Transverse colon (tissue), 4 donors: ENCODE measurements at regions of chr1 and their contacts with region 1.

Region 1: DNA sequence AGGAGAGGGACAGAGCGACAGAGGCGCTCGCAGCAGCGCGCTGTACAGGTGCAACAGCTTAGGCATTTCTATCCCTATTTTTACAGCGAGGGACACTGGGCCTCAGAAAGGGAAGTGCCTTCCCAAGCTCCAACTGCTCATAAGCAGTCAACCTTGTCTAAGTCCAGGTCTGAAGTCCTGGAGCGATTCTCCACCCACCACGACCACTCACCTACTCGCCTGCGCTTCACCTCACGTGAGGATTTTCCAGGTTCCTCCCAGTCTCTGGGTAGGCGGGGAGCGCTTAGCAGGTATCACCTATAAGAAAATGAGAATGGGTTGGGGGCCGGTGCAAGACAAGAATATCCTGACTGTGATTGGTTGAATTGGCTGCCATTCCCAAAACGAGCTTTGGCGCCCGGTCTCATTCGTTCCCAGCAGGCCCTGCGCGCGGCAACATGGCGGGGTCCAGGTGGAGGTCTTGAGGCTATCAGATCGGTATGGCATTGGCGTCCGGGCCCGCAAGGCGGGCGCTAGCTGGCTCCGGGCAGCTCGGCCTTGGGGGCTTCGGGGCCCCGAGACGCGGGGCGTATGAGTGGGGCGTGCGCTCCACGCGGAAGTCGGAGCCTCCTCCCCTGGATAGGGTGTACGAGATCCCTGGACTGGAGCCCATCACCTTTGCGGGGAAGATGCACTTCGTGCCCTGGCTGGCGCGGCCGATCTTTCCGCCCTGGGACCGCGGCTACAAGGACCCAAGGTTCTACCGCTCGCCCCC is at the starts of genes CYB5RL and MRPL37:
- DNase-seq: peak; percentile 94
- H3K4me3 ChIP-seq: peak within 1 kb of the TSS; percentile 84 to 97 (median 90)
- H3K27ac ChIP-seq: peak within 1 kb of the TSS; percentile 80 to 87 (median 82)
- H3K4me1 ChIP-seq: peaks cover 10 to 28% (median 23%) of the 10 kb centered on the region in 4 donors
- H3K27me3 ChIP-seq: no peaks in the 10 kb centered on the region
- CTCF ChIP-seq: no peak
- EP300 ChIP-seq: no peak
- POLR2A ChIP-seq: peak; percentile 55
- total RNA-seq, gene CYB5RL: 1.9 to 5.1 (median 3.6) TPM
- total RNA-seq, gene MRPL37: 9.7 to 122 (median 57.8) TPM

Region 2: DNA sequence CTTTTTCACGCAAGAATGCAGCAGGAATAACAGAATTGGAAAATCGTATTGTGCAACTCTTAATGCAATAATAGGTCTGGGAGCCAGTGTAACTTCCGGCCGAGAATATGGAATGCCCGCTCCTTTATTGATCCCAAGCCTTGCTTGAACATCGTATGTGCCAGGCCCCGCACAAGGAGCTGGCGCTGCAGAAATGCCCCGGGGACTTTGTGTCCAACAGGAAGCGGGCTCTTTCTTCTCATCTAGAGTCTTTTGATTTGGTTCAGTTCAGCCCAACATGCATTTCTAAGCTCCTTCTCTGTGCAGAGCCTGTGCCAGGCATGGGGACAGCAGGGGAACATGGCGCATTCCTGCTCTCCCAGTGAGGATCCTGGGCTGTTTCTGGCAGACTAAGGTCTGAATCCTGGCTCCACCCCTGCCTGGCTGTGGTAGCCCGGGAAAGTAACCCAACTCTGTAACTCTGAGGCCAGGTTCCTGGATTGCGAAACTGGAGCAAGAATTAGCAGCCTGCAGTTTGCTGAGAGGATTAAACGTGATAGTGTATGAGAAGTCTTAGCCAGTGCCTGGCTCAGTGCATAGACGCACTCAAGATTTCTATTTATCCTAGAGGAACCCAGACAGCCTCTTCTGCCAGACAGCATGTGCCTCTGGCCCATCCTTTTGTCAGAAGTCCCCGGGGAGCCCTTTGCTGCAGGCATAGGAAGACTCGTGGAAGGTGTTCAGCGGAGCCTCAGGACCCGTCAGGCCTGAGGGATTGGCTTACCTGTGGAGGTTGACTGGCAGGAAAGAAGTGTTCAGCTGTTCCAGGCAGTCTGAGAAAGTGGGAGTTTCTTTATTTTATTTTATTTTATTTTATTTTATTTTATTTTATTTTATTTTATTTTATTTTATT is 46.1 kb before region 1 on chr1:
- in situ Hi-C with region 1: no loop called
- intact Hi-C with region 1: no loop called
- DNase-seq: peak; percentile 55
- H3K4me3 ChIP-seq: no peak overlapping the region
- H3K27ac ChIP-seq: no peak overlapping the region
- H3K4me1 ChIP-seq: peaks cover 0 to 8% (median 3%) of the 10 kb centered on the region in 4 donors
- H3K27me3 ChIP-seq: no peaks in the 10 kb centered on the region
- CTCF ChIP-seq: no peak
- EP300 ChIP-seq: no peak
- POLR2A ChIP-seq: no peak

Region 3: DNA sequence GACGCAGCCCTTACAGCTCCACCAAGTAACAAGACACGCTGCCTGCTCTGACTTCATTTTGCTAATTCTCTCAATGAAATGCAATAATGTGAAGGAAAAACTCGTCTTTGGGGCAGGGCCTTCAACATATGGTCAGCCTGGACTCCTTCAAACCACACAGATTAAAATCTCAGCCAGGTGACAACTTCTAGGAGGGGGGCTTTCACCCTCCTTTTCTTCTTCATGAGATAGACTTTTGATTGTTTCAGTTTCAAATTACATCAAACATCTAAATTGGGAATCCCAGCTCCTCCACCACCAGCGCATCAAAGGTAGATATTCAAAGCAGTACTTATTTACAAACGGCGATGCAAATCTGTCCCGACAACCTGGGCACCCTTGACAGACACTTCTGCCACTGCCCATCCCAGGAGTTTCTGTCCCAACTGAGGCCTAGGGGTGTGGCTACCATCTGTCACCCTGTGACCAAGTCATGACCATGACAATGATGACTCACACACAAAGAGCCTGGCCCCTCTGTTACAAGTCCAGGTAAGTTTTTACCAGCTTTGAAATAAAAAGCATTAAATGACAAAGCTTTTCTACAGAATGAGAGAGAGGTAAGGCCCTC is 176.6 kb after region 1 on chr1:
- in situ Hi-C with region 1: loop called in 1 of 4 experiments (anchors 25 kb)
- intact Hi-C with region 1: no loop called
- DNase-seq: peak; percentile 71
- H3K4me3 ChIP-seq: no peak overlapping the region
- H3K27ac ChIP-seq: peak overlapping the region in 2 of 4 donors; percentile 32 to 45
- H3K4me1 ChIP-seq: peaks cover 22 to 59% (median 43%) of the 10 kb centered on the region in 4 donors
- H3K27me3 ChIP-seq: no peaks in the 10 kb centered on the region
- CTCF ChIP-seq: no peak
- EP300 ChIP-seq: no peak
- POLR2A ChIP-seq: no peak